ENCODE measurements at regions of chr16 and their contacts with region 1.

Region 1: DNA sequence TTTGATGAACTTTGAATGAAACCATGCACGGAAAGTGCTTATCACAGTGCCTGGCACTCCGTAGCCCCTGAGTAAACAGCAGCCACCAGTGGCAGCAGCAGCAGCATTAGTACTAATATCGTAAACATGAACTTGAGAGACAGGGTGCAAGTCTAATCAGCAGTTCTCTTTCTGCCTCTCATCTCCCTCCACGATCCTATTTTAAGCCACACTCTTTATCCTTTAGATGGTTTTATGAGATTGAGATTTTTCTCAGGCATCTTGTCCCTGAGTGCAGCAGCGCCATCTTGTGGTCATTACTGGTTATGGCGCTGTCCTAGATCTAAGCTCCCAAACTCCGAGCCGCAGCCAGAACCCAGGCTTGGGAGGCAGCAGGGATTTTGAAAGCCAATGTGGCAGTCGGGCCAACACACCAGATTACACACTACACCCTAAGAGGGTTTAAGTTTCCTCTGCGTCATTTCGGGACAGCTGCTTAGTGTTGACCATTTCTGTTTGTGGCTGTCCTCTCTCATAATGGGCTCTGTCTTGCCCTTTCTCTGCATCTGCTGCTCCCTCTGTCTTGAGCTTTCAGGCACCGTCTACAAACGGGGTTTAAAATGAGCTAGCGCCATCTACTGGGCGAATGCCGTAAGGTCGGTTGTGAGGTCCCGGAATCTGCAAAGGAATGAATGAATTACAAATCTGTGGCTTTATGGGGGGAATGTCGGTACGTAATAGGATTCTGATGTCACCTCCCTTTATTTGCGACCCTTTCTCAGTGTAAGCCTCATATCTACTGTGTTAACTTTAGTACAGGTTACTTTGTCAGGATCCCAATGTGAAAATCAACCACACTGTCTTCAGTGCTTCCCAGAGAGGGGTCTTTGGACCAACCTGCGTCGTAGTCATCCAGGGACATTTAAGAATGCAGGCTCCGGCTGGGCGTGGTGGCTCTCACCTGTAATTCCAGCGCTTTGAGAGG is 64.5 kb downstream of the CYLD start:
- DNase-seq: peak; percentile 19
- H3K4me3 ChIP-seq: peak overlapping the region; percentile 11 to 62 (median 38)
- H3K27ac ChIP-seq: peak overlapping the region in 3 of 4 donors; percentile 64 to 84 (median 78)
- H3K4me1 ChIP-seq: peaks cover 0 to 13% (median 6%) of the 10 kb centered on the region in 3 donors
- H3K27me3 ChIP-seq: no peaks in the 10 kb centered on the region
- CTCF ChIP-seq: peak; percentile 89 to 98 (median 94)
- POLR2A ChIP-seq: no peak

Region 2: GRCh38 chr16:50368410-50369132 is 437.8 kb before region 1 on chr16 and contains the start of gene BRD7:
- intact Hi-C with region 1: loop called (anchors 10 kb)
- DNase-seq: no peak
- H3K4me3 ChIP-seq: peak within 1 kb of the TSS; percentile 70 to 100 (median 88)
- H3K27ac ChIP-seq: peak within 1 kb of the TSS; percentile 86 to 95 (median 92)
- H3K4me1 ChIP-seq: peaks cover 9 to 57% (median 19%) of the 10 kb centered on the region in 3 donors
- H3K27me3 ChIP-seq: no peaks in the 10 kb centered on the region
- CTCF ChIP-seq: peak in 4 of 6 experiments; percentile 25 to 61 (median 46)
- POLR2A ChIP-seq: no peak
- total RNA-seq, gene BRD7: 42.0 to 81.9 (median 51.4) TPM

Region 3: DNA sequence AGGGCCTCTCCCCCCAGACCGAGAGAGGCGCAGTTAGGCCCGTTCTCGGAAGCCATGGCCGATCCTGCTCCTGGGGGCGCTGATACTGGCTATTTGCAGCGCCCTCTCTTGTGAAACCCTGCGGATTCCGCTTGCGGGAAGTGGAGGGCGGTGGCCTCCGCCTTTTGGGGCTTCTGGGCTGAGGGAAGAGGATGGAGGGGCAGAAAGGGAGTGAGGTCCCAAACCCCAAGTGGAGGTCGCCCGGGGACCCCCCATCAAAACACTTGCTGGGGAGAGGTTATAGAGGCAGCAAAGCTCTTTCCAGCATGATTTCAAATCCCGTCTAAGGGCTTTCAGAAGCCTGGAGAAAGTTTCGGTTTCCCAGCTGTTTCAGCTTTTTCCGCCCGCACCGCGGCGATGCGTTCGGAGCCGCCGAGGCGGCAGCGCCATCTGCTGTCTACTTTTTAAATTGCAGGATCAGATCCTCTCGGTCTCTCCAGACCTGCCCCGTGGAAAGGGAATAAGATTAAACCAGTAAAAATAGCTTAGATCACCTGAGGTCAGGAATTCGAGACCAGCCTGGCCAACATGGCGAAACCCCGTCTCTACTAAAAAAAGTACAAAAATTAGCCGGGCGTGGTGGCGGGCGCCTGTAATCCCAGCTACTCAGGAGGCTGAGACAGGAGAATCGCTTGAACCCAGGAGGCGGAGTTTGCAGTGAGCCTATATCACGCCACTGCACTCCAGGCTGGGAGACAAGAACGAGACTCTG is 141.1 kb before region 1 on chr16:
- intact Hi-C with region 1: loop called (anchors 5 kb)
- DNase-seq: no peak
- H3K4me3 ChIP-seq: peak overlapping the region; percentile 21 to 68 (median 54)
- H3K27ac ChIP-seq: peak overlapping the region; percentile 6 to 74 (median 72)
- H3K4me1 ChIP-seq: peaks cover 7 to 44% (median 30%) of the 10 kb centered on the region in 3 donors
- H3K27me3 ChIP-seq: no peaks in the 10 kb centered on the region
- CTCF ChIP-seq: peak; percentile 89 to 96 (median 93)
- POLR2A ChIP-seq: no peak

Region 4: DNA sequence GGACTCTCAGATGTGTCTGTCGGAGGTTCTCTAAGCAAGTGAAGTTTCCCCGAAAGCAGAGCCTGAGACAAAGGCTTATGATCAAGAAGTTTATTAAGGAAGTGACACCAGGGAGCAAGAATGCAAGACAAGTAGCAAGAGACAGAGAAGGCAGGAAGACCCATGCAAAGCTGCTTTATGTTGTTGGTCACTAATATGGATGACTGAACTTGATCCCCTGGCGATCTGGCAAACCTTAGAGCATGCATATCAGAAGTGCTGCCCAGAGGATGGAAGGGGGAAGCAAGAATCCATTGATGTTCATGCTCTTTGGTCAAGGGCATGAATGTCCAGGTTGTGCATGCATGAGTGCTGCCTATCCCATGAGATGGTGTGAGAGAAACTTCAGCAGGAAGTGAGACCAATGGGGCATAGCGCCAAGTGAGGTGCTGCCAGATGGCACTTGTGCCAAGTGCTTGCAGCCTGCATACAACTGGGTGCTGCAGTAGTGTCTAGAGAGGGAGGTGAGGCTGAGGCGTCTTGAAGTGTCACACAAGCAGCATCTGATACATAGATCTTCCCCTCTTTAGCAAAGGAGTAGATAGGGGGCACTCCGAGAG is 168.2 kb after region 1 on chr16:
- intact Hi-C with region 1: no loop called
- DNase-seq: no peak
- H3K4me3 ChIP-seq: no peak overlapping the region
- H3K27ac ChIP-seq: no peak overlapping the region
- H3K4me1 ChIP-seq: no peaks in the 10 kb centered on the region
- H3K27me3 ChIP-seq: peaks cover 0 to 13% (median 0%) of the 10 kb centered on the region in 4 donors
- CTCF ChIP-seq: no peak
- POLR2A ChIP-seq: no peak